CD4-positive, alpha-beta memory T cell (primary cell): ENCODE measurements at regions of chr16 and their contacts with region 1.

Region 1: DNA sequence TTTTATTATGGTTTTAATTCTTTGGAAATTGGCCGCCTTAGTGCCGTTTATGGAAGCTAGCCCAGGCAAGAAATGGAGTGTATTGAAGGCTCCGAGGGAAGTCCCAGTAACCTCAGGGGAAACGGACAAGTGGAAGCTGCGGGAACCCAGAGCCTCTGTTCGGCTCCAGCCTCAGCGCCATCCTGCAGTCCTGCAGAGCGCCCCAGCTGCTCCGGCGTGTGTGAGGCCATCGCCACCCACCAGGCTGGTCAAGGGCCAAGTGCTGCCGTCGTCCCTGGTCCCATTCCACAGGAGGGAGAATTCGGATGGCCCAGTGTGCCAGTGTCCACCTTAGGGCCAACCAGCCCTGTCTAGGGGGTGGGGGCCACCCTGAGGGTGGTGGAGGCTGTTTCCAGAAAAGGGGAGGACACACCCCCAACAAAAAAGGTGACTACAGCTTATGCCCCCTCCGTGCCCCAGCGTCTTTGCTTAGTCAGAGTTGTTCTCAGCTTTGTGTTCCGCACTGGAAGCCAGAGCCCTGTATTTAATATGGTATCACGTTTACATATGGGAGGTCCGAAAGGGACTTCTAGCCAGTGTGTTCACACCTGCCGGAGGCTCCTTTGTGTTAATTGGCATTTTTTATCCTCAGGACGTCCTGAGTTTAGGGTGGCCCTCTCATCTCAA is 13.0 kb downstream of the MGRN1 start:
- DNase-seq: no peak
- H3K4me3 ChIP-seq: no peak overlapping the region
- H3K4me3 Mint-ChIP-seq: no peak overlapping the region
- H3K27ac ChIP-seq: no peak overlapping the region
- H3K27ac Mint-ChIP-seq: no peak overlapping the region
- H3K4me1 ChIP-seq: peaks cover 11% of the 10 kb centered on the region
- H3K4me1 Mint-ChIP-seq: peaks cover 8 to 32% (median 15%) of the 10 kb centered on the region in 4 donors
- H3K27me3 ChIP-seq: no peaks in the 10 kb centered on the region
- H3K27me3 Mint-ChIP-seq: no peaks in the 10 kb centered on the region

Region 2: DNA sequence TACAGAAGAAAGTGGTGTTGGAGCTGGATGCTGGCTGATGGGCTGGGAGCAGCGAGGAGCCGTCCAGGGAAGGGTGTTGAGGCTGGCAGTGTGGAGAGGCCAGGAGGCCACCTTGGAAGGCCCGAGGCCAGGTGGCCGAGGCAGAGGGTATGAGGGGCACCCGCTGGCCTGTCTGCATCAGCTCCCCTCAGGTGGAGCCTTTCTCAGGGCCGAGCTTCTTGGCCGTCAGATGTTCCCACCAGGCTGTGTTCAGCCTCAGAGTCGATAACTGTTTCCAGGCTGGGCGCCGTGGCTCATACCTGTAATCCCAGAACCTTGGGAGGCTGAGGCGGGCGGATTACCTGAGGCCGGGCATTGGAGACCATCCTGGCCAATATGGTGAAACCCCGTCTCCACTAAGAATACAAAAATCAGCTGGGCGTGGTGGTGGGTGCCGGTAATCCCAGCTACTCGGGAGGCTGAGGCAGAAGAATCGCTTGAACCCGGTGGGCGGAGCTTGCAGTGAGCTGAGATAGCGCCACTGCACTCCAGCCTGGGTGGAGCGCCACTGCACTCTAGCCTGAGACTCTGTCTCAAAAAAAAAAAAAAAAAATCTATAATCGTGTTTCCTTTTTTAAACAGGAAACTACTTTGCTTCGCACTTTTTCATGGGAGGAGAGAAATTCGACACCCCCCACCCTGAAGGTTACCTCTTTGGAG is 12.3 kb after region 1 on chr16:
- CTCF ChIA-PET with region 1: interaction called, 10 read pairs
- POLR2A ChIA-PET with region 1: interaction called, 3 read pairs
- intact Hi-C with region 1: no loop called
- DNase-seq: peak in 1 of 5 donors; percentile 9
- H3K4me3 ChIP-seq: no peak overlapping the region
- H3K4me3 Mint-ChIP-seq: peak overlapping the region in 1 of 8 donors; percentile 13
- H3K27ac ChIP-seq: no peak overlapping the region
- H3K27ac Mint-ChIP-seq: peak overlapping the region in 6 of 7 donors; percentile 67 to 91 (median 84)
- H3K4me1 ChIP-seq: peaks cover 22% of the 10 kb centered on the region
- H3K4me1 Mint-ChIP-seq: peaks cover 14 to 35% (median 19%) of the 10 kb centered on the region in 4 donors
- H3K27me3 ChIP-seq: no peaks in the 10 kb centered on the region
- H3K27me3 Mint-ChIP-seq: no peaks in the 10 kb centered on the region

Region 3: DNA sequence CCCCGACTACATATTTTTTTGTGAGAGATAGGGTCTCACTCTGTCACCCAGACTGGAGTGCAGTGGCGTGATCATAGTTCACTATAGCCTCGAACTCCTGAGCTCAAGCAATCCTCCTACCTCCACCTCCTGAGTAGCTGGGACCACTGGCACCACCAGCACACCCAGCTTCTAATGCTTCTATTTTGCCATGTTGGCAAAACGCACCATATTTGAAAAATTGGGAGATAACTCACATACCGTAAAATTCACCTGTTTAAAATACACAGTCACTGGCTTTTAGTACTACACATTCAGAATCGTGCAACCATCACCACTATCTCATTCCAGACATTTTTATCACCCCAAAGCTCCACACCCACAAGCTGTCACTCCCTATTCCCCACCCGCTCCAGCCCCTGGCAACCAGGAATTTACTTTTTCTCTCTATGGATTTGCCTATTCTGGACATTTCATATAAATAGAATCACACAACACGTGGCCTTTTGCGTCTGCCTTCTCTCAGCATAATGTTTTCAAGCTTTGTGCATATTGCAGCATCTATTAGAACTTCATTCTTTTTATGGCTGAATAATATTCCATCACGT is 274.3 kb after region 1 on chr16:
- CTCF ChIA-PET with region 1: no interaction called
- POLR2A ChIA-PET with region 1: no interaction called
- intact Hi-C with region 1: no loop called
- DNase-seq: no peak
- H3K4me3 ChIP-seq: no peak overlapping the region
- H3K4me3 Mint-ChIP-seq: no peak overlapping the region
- H3K27ac ChIP-seq: no peak overlapping the region
- H3K27ac Mint-ChIP-seq: no peak overlapping the region
- H3K4me1 ChIP-seq: no peaks in the 10 kb centered on the region
- H3K4me1 Mint-ChIP-seq: no peaks in the 10 kb centered on the region
- H3K27me3 ChIP-seq: no peaks in the 10 kb centered on the region
- H3K27me3 Mint-ChIP-seq: peaks cover 0 to 2% of the 10 kb centered on the region in 2 donors